SK-N-SH (cell line): ENCODE measurements at regions of chr6 and their contacts with region 1.

Region 1: GRCh38 chr6:137094411-137095008 is 49.7 kb upstream of the IL20RA start:
- DNase-seq: peak; percentile 56
- H3K4me3 ChIP-seq: no peak overlapping the region
- H3K27ac ChIP-seq: no peak overlapping the region; a peak in 1 of 4 replicates
- H3K4me1 ChIP-seq: peaks cover 0 to 8% of the 10 kb centered on the region in 2 experiments; a peak in 1 of 4 replicates
- H3K27me3 ChIP-seq: no peaks in the 10 kb centered on the region
- CTCF ChIP-seq: peak; percentile 71
- EP300 ChIP-seq: no peak
- RAD21 ChIP-seq: peak; percentile 90

Region 2: DNA sequence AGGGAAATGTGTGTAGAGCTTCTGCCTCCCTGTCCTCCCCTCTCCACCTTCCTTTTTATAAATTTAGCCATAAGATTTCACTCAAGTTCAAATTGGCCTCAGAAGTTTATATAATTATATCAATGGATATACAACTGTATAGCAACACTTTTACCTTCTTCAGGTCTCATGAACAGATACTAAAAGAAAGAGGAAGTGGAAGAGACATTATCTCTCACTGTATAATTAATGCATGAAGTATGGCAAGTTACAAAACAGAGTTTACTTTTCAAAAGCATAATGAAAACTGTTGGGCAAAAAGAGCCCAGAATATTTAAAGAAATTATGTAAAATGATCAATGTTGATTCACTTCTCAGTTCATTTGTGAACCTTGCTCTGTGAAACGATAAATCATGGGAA is 1143.3 kb before region 1 on chr6:
- CTCF ChIA-PET with region 1: no interaction called
- POLR2A ChIA-PET with region 1: no interaction called
- DNase-seq: no peak
- H3K4me3 ChIP-seq: no peak overlapping the region
- H3K27ac ChIP-seq: no peak overlapping the region
- H3K4me1 ChIP-seq: no peaks in the 10 kb centered on the region; a peak in 1 of 4 replicates
- H3K27me3 ChIP-seq: no peaks in the 10 kb centered on the region
- CTCF ChIP-seq: no peak
- EP300 ChIP-seq: no peak
- RAD21 ChIP-seq: no peak

Region 3: GRCh38 chr6:137076277-137077068 is 18.0 kb before region 1 on chr6:
- CTCF ChIA-PET with region 1: interaction called, 39 read pairs
- POLR2A ChIA-PET with region 1: interaction called, 4 read pairs
- DNase-seq: peak; percentile 65
- H3K4me3 ChIP-seq: no peak overlapping the region; a peak in 1 of 4 replicates
- H3K27ac ChIP-seq: no peak overlapping the region; a peak in 1 of 4 replicates
- H3K4me1 ChIP-seq: no peaks in the 10 kb centered on the region; a peak in 1 of 4 replicates
- H3K27me3 ChIP-seq: no peaks in the 10 kb centered on the region
- CTCF ChIP-seq: peak; percentile 64
- EP300 ChIP-seq: no peak
- RAD21 ChIP-seq: peak; percentile 81

Region 4: DNA sequence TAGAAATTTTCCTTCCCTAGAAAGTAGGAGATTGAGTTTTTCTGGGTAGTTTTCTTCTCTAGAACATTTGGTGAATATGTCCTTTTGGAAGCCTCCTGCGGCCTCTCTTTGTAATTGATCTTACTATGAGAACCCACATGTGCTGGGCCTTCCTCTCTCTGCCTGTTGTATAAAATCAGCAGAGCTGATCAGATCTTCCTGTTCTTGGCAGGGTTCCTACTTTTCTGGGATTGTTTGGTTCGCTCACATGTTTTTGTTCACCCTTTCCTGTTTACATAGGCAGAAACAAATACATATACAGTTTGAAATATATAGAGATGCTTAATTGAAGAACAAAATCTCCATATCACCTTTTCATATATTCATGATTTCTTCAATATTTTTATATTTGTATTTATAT is 21.1 kb after region 1 on chr6:
- CTCF ChIA-PET with region 1: interaction called, 17 read pairs
- POLR2A ChIA-PET with region 1: no interaction called
- DNase-seq: peak; percentile 9
- H3K4me3 ChIP-seq: no peak overlapping the region
- H3K27ac ChIP-seq: no peak overlapping the region
- H3K4me1 ChIP-seq: no peaks in the 10 kb centered on the region
- H3K27me3 ChIP-seq: no peaks in the 10 kb centered on the region
- CTCF ChIP-seq: no peak
- EP300 ChIP-seq: no peak
- RAD21 ChIP-seq: no peak

Region 5: DNA sequence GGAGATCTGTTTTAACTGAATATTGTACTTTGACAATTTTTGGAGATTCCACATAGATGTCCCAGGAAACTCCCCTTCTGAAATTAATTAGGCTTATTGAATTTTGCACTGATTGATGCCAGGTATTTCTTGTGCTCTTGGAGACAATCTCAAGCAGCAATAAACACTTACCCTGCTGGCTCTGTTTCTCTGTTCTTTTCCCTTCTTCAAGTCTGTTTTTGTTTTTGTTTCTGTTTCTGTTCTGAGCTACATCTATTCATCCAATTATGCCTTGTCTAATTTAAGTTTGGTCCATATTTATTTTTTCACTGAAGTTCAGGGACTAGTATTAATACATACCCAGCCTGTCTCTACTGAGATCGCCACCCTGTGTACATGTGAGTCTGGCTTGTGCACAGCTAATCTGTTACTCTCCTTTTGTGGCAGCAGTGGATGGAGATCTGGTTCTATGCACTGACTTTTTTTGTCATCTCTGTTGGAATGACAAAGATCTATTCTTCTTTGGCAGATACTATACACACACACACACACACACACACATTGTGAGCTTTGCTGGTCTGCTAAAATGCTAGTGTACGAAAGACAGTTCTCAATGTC is 27.0 kb after region 1 on chr6:
- CTCF ChIA-PET with region 1: interaction called, 17 read pairs
- POLR2A ChIA-PET with region 1: no interaction called
- DNase-seq: no peak
- H3K4me3 ChIP-seq: no peak overlapping the region
- H3K27ac ChIP-seq: no peak overlapping the region; a peak in 1 of 4 replicates
- H3K4me1 ChIP-seq: no peaks in the 10 kb centered on the region
- H3K27me3 ChIP-seq: no peaks in the 10 kb centered on the region
- CTCF ChIP-seq: no peak
- EP300 ChIP-seq: no peak
- RAD21 ChIP-seq: no peak

Region 6: DNA sequence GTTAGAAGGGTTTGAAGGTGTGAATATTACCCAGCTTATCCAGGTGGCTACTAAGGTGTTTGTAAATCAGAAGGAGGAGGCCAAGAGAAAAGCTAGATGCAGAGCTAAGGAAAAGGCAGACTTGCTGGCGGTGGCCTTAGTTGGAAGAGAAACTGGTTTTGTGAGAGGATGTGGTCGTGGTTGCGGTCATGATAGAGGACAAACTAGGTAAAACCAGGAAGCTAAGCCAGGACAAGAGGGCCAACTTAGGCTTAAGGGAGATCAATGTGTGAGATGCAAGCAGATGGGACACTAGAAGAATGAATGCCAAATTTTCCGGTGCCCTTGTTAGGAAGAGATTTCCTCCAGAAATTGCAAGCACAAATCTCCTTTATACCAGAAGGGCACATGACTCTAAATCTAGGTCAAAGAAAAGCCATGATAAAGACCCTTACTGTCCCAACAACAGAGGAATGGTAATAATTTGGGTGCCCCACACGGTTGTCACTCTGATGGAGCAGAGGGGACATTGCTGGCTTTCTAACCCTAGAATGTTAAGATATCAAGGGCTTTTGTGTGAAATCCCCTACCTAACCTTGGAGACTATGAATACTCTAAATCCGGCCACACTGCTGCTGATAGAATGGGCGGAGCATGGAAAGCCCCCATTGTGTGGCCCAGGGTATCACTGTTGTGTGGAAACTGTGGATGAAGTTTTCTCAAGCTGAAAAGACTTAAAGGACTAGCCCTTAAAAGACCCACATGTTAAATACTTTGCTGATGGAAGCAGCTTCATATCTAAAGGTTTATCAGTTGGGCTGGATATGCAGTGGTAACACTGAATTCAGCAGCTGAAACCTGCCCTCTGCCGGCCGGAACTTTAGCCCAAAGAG is 71.1 kb after region 1 on chr6:
- CTCF ChIA-PET with region 1: interaction called, 17 read pairs
- POLR2A ChIA-PET with region 1: no interaction called
- DNase-seq: peak; percentile 17
- H3K4me3 ChIP-seq: no peak overlapping the region
- H3K27ac ChIP-seq: no peak overlapping the region
- H3K4me1 ChIP-seq: no peaks in the 10 kb centered on the region
- H3K27me3 ChIP-seq: no peaks in the 10 kb centered on the region
- CTCF ChIP-seq: peak; percentile 47
- EP300 ChIP-seq: no peak
- RAD21 ChIP-seq: peak; percentile 64

Region 7: GRCh38 chr6:137200288-137200687 is 105.8 kb after region 1 on chr6:
- CTCF ChIA-PET with region 1: interaction called, 11 read pairs
- POLR2A ChIA-PET with region 1: no interaction called
- DNase-seq: no peak
- H3K4me3 ChIP-seq: no peak overlapping the region
- H3K27ac ChIP-seq: no peak overlapping the region; a peak in 1 of 4 replicates
- H3K4me1 ChIP-seq: no peaks in the 10 kb centered on the region
- H3K27me3 ChIP-seq: no peaks in the 10 kb centered on the region
- CTCF ChIP-seq: no peak
- EP300 ChIP-seq: no peak
- RAD21 ChIP-seq: no peak

Region 8: GRCh38 chr6:137313928-137314855 is 219.7 kb after region 1 on chr6:
- CTCF ChIA-PET with region 1: interaction called, 29 read pairs
- POLR2A ChIA-PET with region 1: no interaction called
- DNase-seq: peak; percentile 64
- H3K4me3 ChIP-seq: peak overlapping the region in 1 of 2 experiments; percentile 20; a peak in 1 of 4 replicates
- H3K27ac ChIP-seq: no peak overlapping the region
- H3K4me1 ChIP-seq: peaks cover 0 to 5% of the 10 kb centered on the region in 2 experiments; a peak in 2 of 4 replicates
- H3K27me3 ChIP-seq: no peaks in the 10 kb centered on the region
- CTCF ChIP-seq: peak; percentile 88
- EP300 ChIP-seq: no peak
- RAD21 ChIP-seq: peak; percentile 82